Ascending aorta (tissue), 2 donors: ENCODE measurements at regions of chr18 and their contacts with region 1.

Region 1: DNA sequence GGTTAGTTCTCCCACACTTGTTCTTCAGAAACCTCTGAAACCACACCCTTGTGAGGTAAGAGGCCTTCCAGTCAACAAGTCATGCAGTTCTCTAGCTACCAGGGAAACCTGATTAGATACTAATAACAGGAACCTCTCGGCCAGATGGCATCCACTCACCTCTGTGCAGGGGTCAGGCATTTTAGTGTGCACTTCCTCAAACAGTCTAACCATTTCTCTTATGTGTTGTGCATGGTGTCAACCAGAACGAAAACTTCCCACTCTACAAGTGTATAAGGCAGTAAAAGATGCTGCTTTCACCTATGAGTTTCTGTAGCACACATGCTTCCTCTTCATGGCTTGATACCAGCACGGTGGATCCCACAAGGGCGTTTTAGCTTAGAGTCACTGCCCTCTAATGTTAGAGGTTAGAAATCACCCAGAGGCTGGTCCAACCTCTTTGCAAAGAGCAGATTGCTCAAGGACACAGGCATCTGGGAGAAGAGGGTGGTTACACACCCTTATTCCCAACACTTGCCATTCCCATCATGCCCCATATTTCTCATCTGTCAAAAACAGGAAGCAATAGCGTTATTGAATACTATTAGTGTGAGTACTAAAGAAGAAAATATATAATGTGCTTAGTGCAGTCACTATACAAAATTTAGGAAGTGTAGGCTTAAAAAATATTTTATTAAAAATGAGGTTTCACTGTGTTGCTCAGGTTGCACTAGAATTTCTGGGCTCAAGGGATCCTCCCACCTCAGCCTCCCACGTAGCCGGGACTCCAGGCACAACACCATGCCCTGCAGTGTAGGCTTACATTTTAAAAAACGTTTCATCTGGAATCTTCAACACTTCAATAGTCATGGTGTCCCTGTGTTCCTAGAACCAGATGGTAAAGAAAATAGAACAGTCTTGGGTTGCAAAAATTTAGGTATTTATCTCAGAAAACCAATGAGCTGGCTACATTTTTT is 34.5 kb upstream of the RAB31 start:
- DNase-seq: peak in 1 of 2 donors; percentile 68
- H3K4me3 ChIP-seq: no peak overlapping the region
- H3K27ac ChIP-seq: no peak overlapping the region
- H3K4me1 ChIP-seq: peaks cover 2 to 3% of the 10 kb centered on the region in 2 donors
- H3K27me3 ChIP-seq: no peaks in the 10 kb centered on the region
- CTCF ChIP-seq: peak in 2 of 3 experiments; percentile 32 to 49

Region 2: DNA sequence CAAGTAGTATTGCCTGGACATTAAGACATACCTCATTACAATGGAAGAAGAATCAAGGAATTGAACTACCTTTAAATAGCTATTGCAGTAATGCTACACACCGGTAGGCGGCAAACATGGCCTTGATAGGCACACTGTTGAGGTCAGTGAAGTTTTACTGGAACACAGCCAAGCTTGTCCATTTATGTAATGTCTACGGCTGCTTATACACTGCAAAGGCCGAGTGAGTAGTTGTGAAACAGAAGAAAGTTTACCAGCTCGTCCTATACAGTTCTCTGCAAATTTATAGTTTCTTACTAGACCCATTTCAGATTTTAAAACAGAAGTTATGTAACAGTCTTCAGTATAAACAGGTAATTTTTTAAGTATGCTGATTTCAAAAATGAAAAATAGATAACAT is 98.0 kb before region 1 on chr18:
- intact Hi-C with region 1: loop called (anchors 1 kb)
- DNase-seq: peak in 1 of 2 donors; percentile 91
- H3K4me3 ChIP-seq: no peak overlapping the region
- H3K27ac ChIP-seq: peak overlapping the region in 1 of 2 donors; percentile 6
- H3K4me1 ChIP-seq: no peaks in the 10 kb centered on the region
- H3K27me3 ChIP-seq: no peaks in the 10 kb centered on the region
- CTCF ChIP-seq: peak; percentile 75 to 86 (median 76)

Region 3: GRCh38 chr18:10274301-10274700 is 600.7 kb after region 1 on chr18:
- intact Hi-C with region 1: no loop called
- DNase-seq: no peak
- H3K4me3 ChIP-seq: no peak overlapping the region
- H3K27ac ChIP-seq: no peak overlapping the region
- H3K4me1 ChIP-seq: peaks cover 9 to 13% of the 10 kb centered on the region in 2 donors
- H3K27me3 ChIP-seq: no peaks in the 10 kb centered on the region
- CTCF ChIP-seq: no peak